Left cardiac atrium (tissue), 4 donors: ENCODE measurements at regions of chr7 and their contacts with region 1.

Region 1: DNA sequence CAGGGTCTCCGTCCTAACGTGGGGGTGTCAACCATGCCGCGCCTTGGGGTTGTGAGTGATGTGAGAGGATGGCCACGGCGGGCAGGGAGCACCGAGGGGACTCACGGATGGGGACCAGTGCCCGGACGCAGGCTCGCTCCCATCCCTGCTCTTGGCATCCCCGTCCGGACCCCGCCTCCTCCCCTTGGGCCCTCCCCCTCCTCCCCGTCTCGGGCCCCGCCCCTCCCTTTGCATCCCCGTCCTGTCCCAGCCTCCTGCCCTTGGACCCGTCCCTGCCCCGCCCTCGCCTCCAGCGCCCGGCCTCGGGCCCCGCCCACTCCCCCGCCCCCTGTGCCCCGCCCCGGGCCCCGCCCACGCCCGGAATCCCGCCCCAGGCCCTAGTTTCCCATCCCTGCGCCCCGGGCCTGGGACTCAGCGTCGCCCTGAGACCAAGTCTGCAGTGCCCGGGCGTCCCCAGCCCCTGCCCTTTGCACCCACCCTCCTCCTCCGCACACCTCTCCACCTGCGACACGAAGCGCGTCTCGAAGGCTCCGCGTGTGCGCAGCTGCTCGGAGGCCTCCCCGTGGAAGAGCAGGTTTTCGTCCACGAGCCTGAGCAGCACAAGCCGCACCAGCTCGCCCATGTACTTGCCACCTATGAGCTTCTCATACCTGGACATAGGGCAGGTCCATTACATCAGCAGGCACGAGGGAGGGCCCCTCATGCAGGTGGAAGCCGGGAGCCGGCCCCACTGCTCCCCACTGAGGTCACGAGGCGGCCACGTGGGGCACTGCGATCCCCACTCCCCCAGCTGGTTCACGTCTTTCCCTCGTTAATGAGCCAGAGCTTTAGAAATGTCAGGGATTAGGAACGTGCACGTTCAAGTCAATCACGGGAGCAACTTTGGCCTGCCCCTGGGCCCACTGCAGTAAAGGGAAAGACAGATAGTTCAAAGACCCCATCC is 5.1 kb upstream of the MYL7 start:
- DNase-seq: peak; percentile 90
- ATAC-seq: peak; percentile 84 to 92

Region 2: GRCh38 chr7:44082541-44083207 is 63.6 kb before region 1 on chr7:
- intact Hi-C with region 1: loop called in 1 of 2 experiments (anchors 5 kb)
- DNase-seq: peak; percentile 100
- ATAC-seq: peak; percentile 94 to 97

Region 3: DNA sequence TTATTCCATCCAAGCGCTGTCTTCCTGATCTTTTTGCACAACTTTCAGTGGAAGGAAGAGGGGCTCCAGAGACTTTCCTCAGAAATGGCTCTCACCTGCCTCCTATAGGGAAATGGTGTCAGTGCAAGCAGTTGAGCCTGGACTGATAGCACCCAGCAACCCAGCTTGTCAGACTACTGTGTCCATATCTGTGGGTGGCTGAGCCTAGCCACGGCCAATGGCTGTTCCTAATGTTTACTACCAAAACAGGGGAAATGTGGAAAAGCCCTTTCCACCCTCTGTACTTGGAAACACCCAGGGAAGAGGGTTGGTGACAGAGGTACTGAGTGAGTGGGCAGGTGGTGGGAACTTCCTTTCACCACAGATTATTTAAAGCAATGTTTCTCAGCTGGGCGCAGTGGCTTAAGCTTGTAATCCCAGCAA is 50.2 kb after region 1 on chr7:
- intact Hi-C with region 1: loop called in 1 of 2 experiments (anchors 10 kb)
- DNase-seq: no peak
- ATAC-seq: peak; percentile 54 to 66